ENCODE measurements at regions of chr19 and their contacts with region 1.

Region 1: DNA sequence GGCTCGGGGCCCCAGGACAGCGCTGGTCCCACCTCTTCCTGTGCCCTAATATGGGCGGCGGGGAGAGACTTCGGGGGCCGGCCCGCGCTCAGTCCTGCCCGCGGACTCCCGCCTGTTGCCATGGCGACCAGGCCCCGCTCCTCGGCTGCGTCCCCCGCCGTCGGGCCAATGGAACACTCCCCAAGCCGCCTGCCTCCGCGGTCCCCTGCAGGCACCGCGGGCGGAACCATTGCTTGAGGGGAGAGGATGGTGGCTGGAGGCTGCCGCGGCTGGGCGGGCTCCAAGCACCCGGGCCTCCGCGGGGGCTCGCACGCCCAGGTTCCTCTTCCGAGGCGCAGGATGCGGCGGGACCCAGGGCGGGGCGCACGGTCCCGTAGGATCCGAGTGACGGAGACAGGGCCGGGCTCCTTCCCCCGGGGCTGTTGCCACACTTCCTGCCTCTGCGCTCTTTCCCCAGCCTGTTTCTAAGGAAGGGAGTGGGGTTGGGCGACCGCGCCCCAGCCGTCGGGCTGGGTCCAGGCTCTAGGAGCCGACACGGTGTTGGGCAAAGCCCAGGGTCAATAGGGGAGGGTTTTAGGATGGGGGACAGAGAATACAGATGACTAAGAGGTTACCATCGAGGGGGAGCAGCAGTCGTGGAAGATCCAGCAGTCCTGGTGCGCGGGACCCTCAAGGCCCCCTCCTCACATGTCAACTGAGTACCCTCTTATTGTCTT is 1.2 kb upstream of the JUNB start:
- DNase-seq: peak; percentile 99
- ATAC-seq: peak; percentile 48
- H3K4me3 Mint-ChIP-seq: peak overlapping the region; percentile 92
- H3K27ac Mint-ChIP-seq: peak overlapping the region; percentile 98
- H3K4me1 Mint-ChIP-seq: peaks cover 28% of the 10 kb centered on the region
- H3K27me3 Mint-ChIP-seq: no peaks in the 10 kb centered on the region

Region 2: GRCh38 chr19:12722566-12723380 is 67.3 kb before region 1 on chr19:
- CTCF ChIA-PET with region 1: interaction called, 7 read pairs
- POLR2A ChIA-PET with region 1: interaction called, 7 read pairs
- intact Hi-C with region 1: loop called in 1 of 2 experiments (anchors 1 kb)
- DNase-seq: peak; percentile 97
- ATAC-seq: peak; percentile 84
- H3K4me3 Mint-ChIP-seq: peak overlapping the region; percentile 99
- H3K27ac Mint-ChIP-seq: peak overlapping the region; percentile 90
- H3K4me1 Mint-ChIP-seq: peaks cover 35% of the 10 kb centered on the region
- H3K27me3 Mint-ChIP-seq: no peaks in the 10 kb centered on the region

Region 3: GRCh38 chr19:12777217-12778016 is 12.6 kb before region 1 on chr19:
- CTCF ChIA-PET with region 1: interaction called, 285 read pairs
- POLR2A ChIA-PET with region 1: interaction called, 53 read pairs
- intact Hi-C with region 1: loop called (anchors 1 kb)
- DNase-seq: peak; percentile 90
- ATAC-seq: peak; percentile 24
- H3K4me3 Mint-ChIP-seq: peak overlapping the region; percentile 82
- H3K27ac Mint-ChIP-seq: peak overlapping the region; percentile 95
- H3K4me1 Mint-ChIP-seq: peaks cover 45% of the 10 kb centered on the region
- H3K27me3 Mint-ChIP-seq: no peaks in the 10 kb centered on the region

Region 4: DNA sequence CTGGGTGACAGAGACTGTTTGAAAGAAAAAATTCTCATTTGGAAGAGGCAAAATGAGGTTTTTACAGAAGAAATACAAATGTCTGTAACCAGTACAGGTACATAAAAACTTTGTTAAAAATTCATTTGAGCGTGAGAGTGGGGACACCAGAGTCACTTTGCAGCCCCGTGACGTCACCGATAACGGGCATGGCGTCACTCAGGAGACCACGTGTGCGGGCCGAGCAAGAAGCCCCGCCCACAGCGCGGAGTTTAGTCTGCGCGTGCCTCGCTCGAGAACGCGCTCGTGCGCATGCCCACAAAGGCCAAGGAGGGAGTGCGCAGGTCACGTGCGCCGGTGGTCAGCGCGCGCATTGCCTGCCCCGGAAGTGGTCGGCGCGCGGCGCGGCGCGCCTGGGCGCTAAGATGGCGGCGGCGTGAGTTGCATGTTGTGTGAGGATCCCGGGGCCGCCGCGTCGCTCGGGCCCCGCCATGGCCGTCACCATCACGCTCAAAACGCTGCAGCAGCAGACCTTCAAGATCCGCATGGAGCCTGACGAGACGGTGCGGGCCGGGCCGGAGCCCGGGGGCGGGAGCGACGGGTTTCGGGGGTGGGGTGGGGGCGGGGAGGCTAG is 155.5 kb after region 1 on chr19 and contains the start of gene RAD23A:
- CTCF ChIA-PET with region 1: no interaction called
- POLR2A ChIA-PET with region 1: no interaction called
- intact Hi-C with region 1: loop called in 1 of 2 experiments (anchors 2 kb)
- DNase-seq: peak; percentile 100
- ATAC-seq: peak; percentile 81
- H3K4me3 Mint-ChIP-seq: peak within 1 kb of the TSS; percentile 88
- H3K27ac Mint-ChIP-seq: peak within 1 kb of the TSS; percentile 97
- H3K4me1 Mint-ChIP-seq: peaks cover 55% of the 10 kb centered on the region
- H3K27me3 Mint-ChIP-seq: no peaks in the 10 kb centered on the region
- total RNA-seq, gene RAD23A: 189 to 265 TPM

Region 5: GRCh38 chr19:14366498-14366915 is 1576.4 kb after region 1 on chr19:
- CTCF ChIA-PET with region 1: no interaction called
- POLR2A ChIA-PET with region 1: interaction called, 6 read pairs
- intact Hi-C with region 1: loop called in 1 of 2 experiments (anchors 10 kb)
- DNase-seq: peak; percentile 95
- ATAC-seq: peak; percentile 50
- H3K4me3 Mint-ChIP-seq: peak overlapping the region; percentile 45
- H3K27ac Mint-ChIP-seq: peak overlapping the region; percentile 100
- H3K4me1 Mint-ChIP-seq: peaks cover 78% of the 10 kb centered on the region
- H3K27me3 Mint-ChIP-seq: no peaks in the 10 kb centered on the region